ENCODE measurements at regions of chr10 and their contacts with region 1.

Region 1: GRCh38 chr10:77049896-77050295 is 587.7 kb downstream of the KCNMA1 start:
- DNase-seq: no peak
- ATAC-seq: no peak
- H3K4me3 ChIP-seq: no peak overlapping the region
- H3K27ac ChIP-seq: no peak overlapping the region
- H3K4me1 ChIP-seq: no peaks in the 10 kb centered on the region
- H3K27me3 ChIP-seq: no peaks in the 10 kb centered on the region
- CTCF ChIP-seq: no peak
- EP300 ChIP-seq: no peak
- POLR2A ChIP-seq: no peak
- RAD21 ChIP-seq: no peak

Region 2: GRCh38 chr10:76885816-76886215 is 164.1 kb before region 1 on chr10:
- CTCF ChIA-PET with region 1: no interaction called
- POLR2A ChIA-PET with region 1: no interaction called
- RAD21 ChIA-PET with region 1: no interaction called
- SMC1A ChIA-PET with region 1: no interaction called
- in situ Hi-C with region 1: no loop called
- intact Hi-C with region 1: no loop called
- DNase-seq: no peak
- ATAC-seq: no peak
- H3K4me3 ChIP-seq: no peak overlapping the region
- H3K27ac ChIP-seq: no peak overlapping the region
- H3K4me1 ChIP-seq: peaks cover 5% of the 10 kb centered on the region; the same call in 1 of the 2 replicates
- H3K27me3 ChIP-seq: no peaks in the 10 kb centered on the region
- CTCF ChIP-seq: no peak
- EP300 ChIP-seq: no peak
- POLR2A ChIP-seq: no peak
- RAD21 ChIP-seq: no peak

Region 3: GRCh38 chr10:76922666-76923065 is 127.2 kb before region 1 on chr10:
- CTCF ChIA-PET with region 1: no interaction called
- POLR2A ChIA-PET with region 1: no interaction called
- RAD21 ChIA-PET with region 1: no interaction called
- SMC1A ChIA-PET with region 1: no interaction called
- in situ Hi-C with region 1: no loop called
- intact Hi-C with region 1: no loop called
- DNase-seq: no peak
- ATAC-seq: no peak
- H3K4me3 ChIP-seq: no peak overlapping the region
- H3K27ac ChIP-seq: no peak overlapping the region
- H3K4me1 ChIP-seq: no peaks in the 10 kb centered on the region
- H3K27me3 ChIP-seq: no peaks in the 10 kb centered on the region
- CTCF ChIP-seq: no peak
- EP300 ChIP-seq: no peak
- POLR2A ChIP-seq: no peak
- RAD21 ChIP-seq: no peak

Region 4: DNA sequence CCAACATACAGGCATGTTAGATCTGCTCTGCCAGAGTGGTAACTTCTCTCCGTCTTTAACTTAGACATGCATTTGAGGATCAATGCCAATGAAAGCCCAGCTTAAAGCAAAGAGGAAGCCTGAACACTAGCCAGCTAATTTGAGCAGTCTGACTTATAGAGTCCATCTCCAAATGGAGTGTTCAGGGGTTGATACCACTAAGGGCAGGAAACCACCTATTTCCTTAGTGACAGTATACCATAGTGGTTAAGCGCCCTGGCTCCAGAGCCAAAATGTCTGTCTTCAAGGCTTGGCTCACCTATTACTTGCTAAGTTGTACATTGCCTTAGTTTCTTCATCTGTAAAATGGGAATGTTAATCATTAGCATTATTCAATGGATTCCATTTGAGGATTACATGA is 90.8 kb before region 1 on chr10:
- CTCF ChIA-PET with region 1: no interaction called
- POLR2A ChIA-PET with region 1: no interaction called
- RAD21 ChIA-PET with region 1: no interaction called
- SMC1A ChIA-PET with region 1: no interaction called
- in situ Hi-C with region 1: no loop called
- intact Hi-C with region 1: no loop called
- DNase-seq: no peak
- ATAC-seq: no peak
- H3K4me3 ChIP-seq: no peak overlapping the region
- H3K27ac ChIP-seq: no peak overlapping the region
- H3K4me1 ChIP-seq: no peaks in the 10 kb centered on the region
- H3K27me3 ChIP-seq: no peaks in the 10 kb centered on the region
- CTCF ChIP-seq: no peak
- EP300 ChIP-seq: no peak
- POLR2A ChIP-seq: no peak
- RAD21 ChIP-seq: no peak

Region 5: DNA sequence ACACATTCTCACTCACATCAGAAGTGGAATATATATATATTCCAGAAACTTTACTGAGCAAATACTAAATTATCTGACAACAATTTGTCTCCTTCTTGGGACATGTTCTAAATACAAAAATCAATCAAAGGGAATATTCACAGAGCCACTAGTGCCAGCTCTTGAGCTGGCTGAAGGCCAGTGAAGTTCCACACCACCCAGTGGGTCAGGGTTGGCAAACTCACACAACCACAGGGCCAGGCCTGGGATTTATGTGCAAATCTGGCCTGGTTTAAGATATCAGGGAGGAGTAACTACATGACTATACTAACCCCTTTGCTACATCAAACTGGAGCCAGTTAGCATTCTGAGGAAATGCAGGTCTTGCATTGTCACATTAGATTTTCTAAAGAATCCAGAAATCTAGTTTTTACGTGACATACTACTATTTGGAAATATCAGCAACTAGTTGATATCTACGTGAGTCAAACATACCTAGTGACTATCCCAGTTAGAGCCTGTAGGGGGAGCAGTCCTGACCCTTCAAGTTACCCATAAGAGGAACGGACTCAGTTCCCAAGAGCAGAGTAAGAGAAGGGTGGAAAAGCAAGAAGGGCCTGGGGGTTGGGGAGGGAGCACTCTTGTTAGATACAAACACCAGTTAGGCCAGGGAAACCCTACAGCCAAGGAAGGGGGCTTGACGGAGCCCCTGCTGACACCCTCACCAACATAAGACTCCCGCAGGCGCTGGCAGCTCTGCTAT is 12.7 kb before region 1 on chr10:
- CTCF ChIA-PET with region 1: interaction called, 15 read pairs
- POLR2A ChIA-PET with region 1: no interaction called
- RAD21 ChIA-PET with region 1: no interaction called
- SMC1A ChIA-PET with region 1: interaction called, 4 read pairs
- in situ Hi-C with region 1: no loop called
- intact Hi-C with region 1: no loop called
- DNase-seq: no peak
- ATAC-seq: peak; percentile 83
- H3K4me3 ChIP-seq: no peak overlapping the region
- H3K27ac ChIP-seq: no peak overlapping the region
- H3K4me1 ChIP-seq: no peaks in the 10 kb centered on the region
- H3K27me3 ChIP-seq: no peaks in the 10 kb centered on the region
- CTCF ChIP-seq: peak; percentile 30 to 58 (median 57)
- EP300 ChIP-seq: no peak
- POLR2A ChIP-seq: no peak
- RAD21 ChIP-seq: no peak

Region 6: DNA sequence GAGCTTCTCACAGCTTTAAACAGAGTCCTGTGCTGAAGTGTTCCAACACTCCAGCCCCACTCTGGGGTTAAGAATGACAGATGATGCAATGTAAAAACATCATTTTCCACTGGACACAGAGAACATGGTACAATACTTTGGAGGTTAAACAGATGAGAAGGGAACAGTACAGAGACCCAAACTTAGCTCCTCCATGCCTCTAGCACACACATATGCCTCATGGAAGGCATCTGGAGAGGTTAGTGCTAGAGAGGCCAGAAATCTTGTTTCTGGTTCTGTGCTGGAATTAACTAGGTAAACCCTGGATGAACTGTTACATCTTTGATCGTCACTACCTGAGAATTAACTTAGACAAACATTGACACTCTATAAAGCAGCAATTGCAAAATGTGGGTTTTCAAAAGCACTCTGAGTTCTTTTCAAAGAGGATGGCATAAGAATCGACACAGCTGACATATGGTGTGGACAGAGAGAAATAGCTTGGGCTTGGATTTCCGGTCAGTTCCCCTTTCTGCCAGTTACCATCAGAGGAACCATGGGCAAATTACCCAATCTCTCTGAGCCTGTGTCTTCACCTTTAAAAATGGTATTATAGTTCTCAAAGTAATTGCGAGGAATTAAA is 505.8 kb after region 1 on chr10:
- CTCF ChIA-PET with region 1: no interaction called
- POLR2A ChIA-PET with region 1: no interaction called
- RAD21 ChIA-PET with region 1: no interaction called
- SMC1A ChIA-PET with region 1: no interaction called
- in situ Hi-C with region 1: no loop called
- intact Hi-C with region 1: no loop called
- DNase-seq: no peak
- ATAC-seq: peak; percentile 26
- H3K4me3 ChIP-seq: no peak overlapping the region
- H3K27ac ChIP-seq: no peak overlapping the region
- H3K4me1 ChIP-seq: no peaks in the 10 kb centered on the region
- H3K27me3 ChIP-seq: no peaks in the 10 kb centered on the region
- CTCF ChIP-seq: no peak
- EP300 ChIP-seq: no peak
- POLR2A ChIP-seq: no peak
- RAD21 ChIP-seq: no peak

Measured in GM12878 (cell line).